Common myeloid progenitor, CD34-positive (primary cell): ENCODE measurements at regions of chr14 and their contacts with region 1.

Region 1: GRCh38 chr14:21825149-21825743 is 151.6 kb upstream of the OR4E1 start:
- DNase-seq: peak; percentile 79 to 89 (median 89)
- H3K4me3 ChIP-seq: no peak overlapping the region
- H3K27ac ChIP-seq: no peak overlapping the region
- H3K4me1 ChIP-seq: peaks cover 7 to 16% (median 12%) of the 10 kb centered on the region in 4 experiments
- H3K27me3 ChIP-seq: peaks cover 0 to 3% (median 0%) of the 10 kb centered on the region in 5 experiments

Region 2: GRCh38 chr14:21385188-21385904 is 439.9 kb before region 1 on chr14:
- CTCF ChIA-PET with region 1: no interaction called
- POLR2A ChIA-PET with region 1: no interaction called
- DNase-seq: peak; percentile 56 to 88 (median 87)
- H3K4me3 ChIP-seq: peak overlapping the region in 6 of 7 experiments; percentile 86 to 99 (median 94)
- H3K27ac ChIP-seq: peak overlapping the region in 1 of 2 experiments; percentile 98
- H3K4me1 ChIP-seq: peaks cover 15 to 50% (median 35%) of the 10 kb centered on the region in 4 experiments
- H3K27me3 ChIP-seq: no peaks in the 10 kb centered on the region

Region 3: DNA sequence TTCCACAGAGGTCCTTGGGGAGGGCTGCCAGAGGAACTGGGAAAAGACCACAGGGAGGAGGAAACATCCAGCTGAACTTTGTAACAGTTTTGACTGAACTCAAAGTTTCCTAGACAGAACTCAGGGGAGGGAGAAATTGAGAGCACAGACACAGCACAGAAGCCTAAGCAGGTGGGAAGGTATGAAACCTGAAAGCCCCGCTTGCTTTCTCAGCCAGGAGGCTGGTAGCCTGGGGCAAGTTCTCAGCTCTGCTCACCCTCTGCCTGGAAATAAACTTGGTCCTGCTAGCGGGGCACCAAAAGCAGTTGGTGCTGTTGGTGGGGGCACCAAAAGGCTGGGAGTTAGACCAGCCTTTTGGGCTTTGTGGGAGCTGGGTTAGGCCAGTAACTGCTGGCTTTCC is 125.7 kb before region 1 on chr14:
- CTCF ChIA-PET with region 1: no interaction called
- POLR2A ChIA-PET with region 1: no interaction called
- DNase-seq: no peak
- H3K4me3 ChIP-seq: no peak overlapping the region
- H3K27ac ChIP-seq: no peak overlapping the region
- H3K4me1 ChIP-seq: no peaks in the 10 kb centered on the region
- H3K27me3 ChIP-seq: peaks cover 0 to 5% (median 2%) of the 10 kb centered on the region in 5 experiments

Region 4: GRCh38 chr14:21840765-21841164 is 15.5 kb after region 1 on chr14:
- CTCF ChIA-PET with region 1: interaction called, 26 read pairs
- POLR2A ChIA-PET with region 1: no interaction called
- DNase-seq: peak; percentile 22 to 48 (median 28)
- H3K4me3 ChIP-seq: no peak overlapping the region
- H3K27ac ChIP-seq: no peak overlapping the region
- H3K4me1 ChIP-seq: no peaks in the 10 kb centered on the region
- H3K27me3 ChIP-seq: peaks cover 0 to 2% (median 0%) of the 10 kb centered on the region in 5 experiments

Region 5: DNA sequence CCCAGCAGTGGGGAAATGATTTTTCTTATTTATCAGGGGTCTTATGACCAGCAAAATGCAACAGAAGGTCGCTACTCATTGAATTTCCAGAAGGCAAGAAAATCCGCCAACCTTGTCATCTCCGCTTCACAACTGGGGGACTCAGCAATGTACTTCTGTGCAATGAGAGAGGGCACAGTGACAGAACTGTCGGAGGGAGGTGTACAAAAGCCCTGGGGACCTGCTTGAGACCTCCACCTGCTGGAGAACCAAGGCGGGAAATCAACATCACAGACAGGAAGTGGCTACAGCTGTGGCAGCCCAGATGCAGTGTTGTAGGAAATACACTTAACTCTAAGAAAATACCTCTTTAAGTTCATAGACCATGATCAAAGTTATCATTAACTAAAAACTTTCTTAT is 99.2 kb after region 1 on chr14:
- CTCF ChIA-PET with region 1: no interaction called
- POLR2A ChIA-PET with region 1: no interaction called
- DNase-seq: peak; percentile 88 to 97 (median 96)
- H3K4me3 ChIP-seq: peak overlapping the region in 6 of 7 experiments; percentile 9 to 60 (median 30)
- H3K27ac ChIP-seq: peak overlapping the region in 1 of 2 experiments; percentile 62
- H3K4me1 ChIP-seq: peaks cover 11 to 34% (median 28%) of the 10 kb centered on the region in 4 experiments
- H3K27me3 ChIP-seq: no peaks in the 10 kb centered on the region

Region 6: DNA sequence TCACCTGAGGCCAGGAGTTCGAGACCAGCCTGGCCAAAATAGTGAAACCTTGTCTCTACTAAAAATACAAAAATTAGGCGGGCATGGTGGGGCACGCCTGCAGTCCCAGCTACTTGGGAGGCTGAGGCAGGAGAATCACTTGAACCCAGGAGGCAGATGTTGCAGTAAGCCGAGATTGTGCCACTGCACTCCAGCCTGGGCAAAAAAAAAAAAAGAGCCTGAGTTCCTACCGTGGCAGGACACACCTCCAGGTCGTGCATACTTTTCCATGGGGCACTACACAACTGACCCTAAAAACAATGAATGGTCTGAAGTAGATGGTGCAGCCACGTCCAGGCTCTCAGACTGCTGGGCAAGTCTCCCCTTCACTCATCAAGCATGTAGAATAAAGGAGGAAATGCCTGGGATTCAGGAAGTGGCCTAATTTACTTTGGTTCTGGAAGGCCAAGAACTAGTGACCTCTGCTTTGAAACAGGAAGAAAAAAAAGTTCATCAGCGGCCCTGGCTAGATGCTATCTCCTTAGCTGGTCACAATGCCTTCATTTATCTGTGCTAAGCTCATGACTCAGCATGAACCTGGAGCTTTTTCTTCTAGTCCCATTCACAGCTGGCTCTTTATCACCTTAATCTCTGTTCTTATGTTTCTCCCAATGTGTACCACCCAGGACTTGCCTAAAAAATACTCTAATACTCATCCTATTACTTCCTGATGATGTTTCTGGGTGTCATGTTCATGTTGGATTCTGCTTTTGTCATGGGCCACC is 874.7 kb after region 1 on chr14:
- CTCF ChIA-PET with region 1: no interaction called
- POLR2A ChIA-PET with region 1: no interaction called
- DNase-seq: peak in 2 of 3 donors; percentile 22 to 40
- H3K4me3 ChIP-seq: no peak overlapping the region
- H3K27ac ChIP-seq: no peak overlapping the region
- H3K4me1 ChIP-seq: peaks cover 0 to 4% (median 4%) of the 10 kb centered on the region in 4 experiments
- H3K27me3 ChIP-seq: peaks cover 0 to 6% (median 4%) of the 10 kb centered on the region in 5 experiments